ENCODE measurements at regions of chr10 and their contacts with region 1.

Region 1: DNA sequence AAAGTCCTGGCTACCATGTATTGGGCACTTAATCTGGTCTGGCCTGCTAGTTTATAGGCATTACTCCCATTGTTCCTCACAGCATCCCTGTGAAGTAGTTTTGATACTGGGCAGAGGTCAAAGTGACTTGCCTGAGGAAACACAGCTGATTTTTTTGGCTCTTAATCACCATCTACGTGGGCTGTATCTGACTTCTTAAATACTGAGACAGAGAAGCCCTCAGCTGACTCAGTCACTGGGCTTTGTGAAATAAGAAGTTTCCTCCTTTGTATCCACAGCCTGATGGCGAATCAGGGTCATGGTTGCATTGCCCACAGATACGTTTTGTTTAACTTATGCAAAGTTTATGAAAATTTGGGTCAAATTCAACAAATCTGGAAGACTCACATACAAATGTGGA is 13.2 kb downstream of the TACR2 start:
- DNase-seq: no peak
- ATAC-seq: no peak
- H3K4me3 Mint-ChIP-seq: no peak overlapping the region
- H3K27ac Mint-ChIP-seq: peak overlapping the region; percentile 24
- H3K4me1 Mint-ChIP-seq: peaks cover 7% of the 10 kb centered on the region
- H3K27me3 Mint-ChIP-seq: no peaks in the 10 kb centered on the region

Region 2: GRCh38 chr10:69374242-69374641 is 29.3 kb before region 1 on chr10:
- CTCF ChIA-PET with region 1: no interaction called
- POLR2A ChIA-PET with region 1: no interaction called
- intact Hi-C with region 1: no loop called
- DNase-seq: no peak
- ATAC-seq: no peak
- H3K4me3 Mint-ChIP-seq: no peak overlapping the region
- H3K27ac Mint-ChIP-seq: no peak overlapping the region
- H3K4me1 Mint-ChIP-seq: peaks cover 9% of the 10 kb centered on the region
- H3K27me3 Mint-ChIP-seq: no peaks in the 10 kb centered on the region

Region 3: GRCh38 chr10:69392481-69393000 is 11.0 kb before region 1 on chr10:
- CTCF ChIA-PET with region 1: interaction called, 15 read pairs
- POLR2A ChIA-PET with region 1: interaction called, 6 read pairs
- intact Hi-C with region 1: no loop called
- DNase-seq: peak; percentile 89
- ATAC-seq: peak; percentile 95
- H3K4me3 Mint-ChIP-seq: no peak overlapping the region
- H3K27ac Mint-ChIP-seq: peak overlapping the region; percentile 67
- H3K4me1 Mint-ChIP-seq: peaks cover 19% of the 10 kb centered on the region
- H3K27me3 Mint-ChIP-seq: no peaks in the 10 kb centered on the region

Measured in activated CD4-positive, alpha-beta T cell treated with anti-CD3 and anti-CD28 coated beads for 36 hours (primary cell).